ENCODE measurements at regions of chr20 and their contacts with region 1.

Region 1: GRCh38 chr20:20664795-20665589 is 47.5 kb downstream of the RALGAPA2 start:
- DNase-seq: no peak
- H3K4me3 ChIP-seq: no peak overlapping the region
- H3K27ac ChIP-seq: no peak overlapping the region
- H3K4me1 ChIP-seq: no peaks in the 10 kb centered on the region
- H3K27me3 ChIP-seq: no peaks in the 10 kb centered on the region
- CTCF ChIP-seq: peak; percentile 68

Region 2: GRCh38 chr20:20824924-20825584 is 160.1 kb after region 1 on chr20:
- CTCF ChIA-PET with region 1: no interaction called
- POLR2A ChIA-PET with region 1: no interaction called
- intact Hi-C with region 1: loop called (anchors 1 kb)
- DNase-seq: peak in 1 of 2 experiments; percentile 42
- H3K4me3 ChIP-seq: no peak overlapping the region
- H3K27ac ChIP-seq: no peak overlapping the region
- H3K4me1 ChIP-seq: no peaks in the 10 kb centered on the region
- H3K27me3 ChIP-seq: peaks cover 59% of the 10 kb centered on the region
- CTCF ChIP-seq: peak; percentile 86

Measured in PC-9 (cell line).